ENCODE measurements at regions of chr2 and their contacts with region 1.

Region 1: DNA sequence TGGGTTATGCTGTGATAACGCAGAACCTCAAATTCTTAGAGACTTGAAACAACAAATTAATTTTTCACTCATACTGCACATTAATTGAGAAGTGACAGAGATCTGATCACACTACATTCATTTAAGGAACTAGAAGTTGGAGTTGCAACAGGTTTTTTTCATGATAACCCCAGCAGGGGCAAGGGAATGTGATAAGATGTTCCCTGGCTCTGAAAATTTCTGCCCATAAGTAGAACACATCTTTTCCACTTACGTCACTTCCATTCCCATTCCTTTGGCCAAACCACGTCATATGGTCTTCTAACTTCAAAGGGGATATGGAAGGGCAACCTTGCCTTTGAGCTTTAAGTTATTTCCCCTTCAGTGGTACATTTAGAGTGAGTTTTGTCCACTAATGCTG is 29.7 kb upstream of the PSME4 start:
- DNase-seq: no peak
- ATAC-seq: no peak
- H3K4me3 Mint-ChIP-seq: no peak overlapping the region
- H3K27ac Mint-ChIP-seq: no peak overlapping the region
- H3K4me1 Mint-ChIP-seq: no peaks in the 10 kb centered on the region
- H3K27me3 Mint-ChIP-seq: no peaks in the 10 kb centered on the region
- CTCF ChIP-seq: no peak

Region 2: GRCh38 chr2:53778536-53779162 is 221.9 kb before region 1 on chr2:
- CTCF ChIA-PET with region 1: no interaction called
- POLR2A ChIA-PET with region 1: interaction called, 10 read pairs
- intact Hi-C with region 1: no loop called
- DNase-seq: no peak
- ATAC-seq: no peak
- H3K4me3 Mint-ChIP-seq: no peak overlapping the region
- H3K27ac Mint-ChIP-seq: no peak overlapping the region
- H3K4me1 Mint-ChIP-seq: peaks cover 27% of the 10 kb centered on the region
- H3K27me3 Mint-ChIP-seq: no peaks in the 10 kb centered on the region
- CTCF ChIP-seq: no peak

Region 3: GRCh38 chr2:54384301-54385203 is 384.0 kb after region 1 on chr2:
- CTCF ChIA-PET with region 1: no interaction called
- POLR2A ChIA-PET with region 1: no interaction called
- intact Hi-C with region 1: no loop called
- DNase-seq: no peak
- ATAC-seq: no peak
- H3K4me3 Mint-ChIP-seq: no peak overlapping the region
- H3K27ac Mint-ChIP-seq: no peak overlapping the region
- H3K4me1 Mint-ChIP-seq: no peaks in the 10 kb centered on the region
- H3K27me3 Mint-ChIP-seq: peaks cover 1% of the 10 kb centered on the region
- CTCF ChIP-seq: no peak